ENCODE measurements at regions of chr12 and their contacts with region 1.

Region 1: DNA sequence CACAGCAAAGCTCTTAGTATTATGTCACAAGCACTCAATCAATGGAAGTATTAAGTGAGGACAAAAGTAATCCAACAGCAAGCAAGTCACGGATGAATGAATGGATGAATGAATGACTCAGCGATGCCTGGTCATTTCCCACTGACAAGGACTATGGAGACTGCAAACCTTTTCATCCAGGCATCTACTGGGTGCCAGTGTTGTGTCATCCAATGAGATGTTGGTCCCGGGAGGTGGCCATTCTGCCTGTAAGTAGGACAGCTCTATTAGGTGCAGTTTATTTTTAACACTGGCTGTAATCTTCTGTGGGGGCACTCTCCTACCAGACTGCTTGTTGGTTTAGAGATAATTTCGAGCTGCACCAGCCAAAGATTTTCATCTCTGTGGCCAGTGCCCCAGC is 39.4 kb downstream of the STAB2 start:
- DNase-seq: peak; percentile 80

Region 2: DNA sequence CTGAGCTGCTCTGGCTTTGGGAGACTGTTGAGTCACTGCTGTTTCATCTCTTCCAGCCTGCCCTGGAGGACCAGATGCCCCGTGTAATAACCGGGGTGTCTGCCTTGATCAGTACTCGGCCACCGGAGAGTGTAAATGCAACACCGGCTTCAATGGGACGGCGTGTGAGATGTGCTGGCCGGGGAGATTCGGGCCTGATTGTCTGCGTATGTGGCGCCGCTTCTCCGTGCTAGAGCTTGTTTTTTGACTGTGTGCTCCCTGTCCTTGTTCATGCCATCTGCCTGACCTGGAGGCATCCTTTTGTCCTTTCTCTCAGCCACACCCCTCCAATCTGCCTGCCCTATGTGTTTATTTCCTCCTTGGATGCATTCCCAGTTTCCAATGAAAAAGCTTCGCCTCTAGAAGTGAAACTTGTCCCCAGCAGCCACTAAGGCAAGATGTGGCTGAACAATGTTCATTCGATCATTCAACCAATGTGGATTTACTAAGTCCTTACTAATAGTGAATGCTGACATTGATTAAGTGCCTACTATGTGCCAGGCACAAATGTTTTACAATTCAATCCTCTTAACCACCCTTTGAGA is 115.9 kb after region 1 on chr12:
- intact Hi-C with region 1: loop called (anchors 10 kb)
- DNase-seq: no peak

Region 3: GRCh38 chr12:103771466-103771865 is 145.0 kb after region 1 on chr12:
- intact Hi-C with region 1: no loop called
- DNase-seq: peak; percentile 77

Region 4: DNA sequence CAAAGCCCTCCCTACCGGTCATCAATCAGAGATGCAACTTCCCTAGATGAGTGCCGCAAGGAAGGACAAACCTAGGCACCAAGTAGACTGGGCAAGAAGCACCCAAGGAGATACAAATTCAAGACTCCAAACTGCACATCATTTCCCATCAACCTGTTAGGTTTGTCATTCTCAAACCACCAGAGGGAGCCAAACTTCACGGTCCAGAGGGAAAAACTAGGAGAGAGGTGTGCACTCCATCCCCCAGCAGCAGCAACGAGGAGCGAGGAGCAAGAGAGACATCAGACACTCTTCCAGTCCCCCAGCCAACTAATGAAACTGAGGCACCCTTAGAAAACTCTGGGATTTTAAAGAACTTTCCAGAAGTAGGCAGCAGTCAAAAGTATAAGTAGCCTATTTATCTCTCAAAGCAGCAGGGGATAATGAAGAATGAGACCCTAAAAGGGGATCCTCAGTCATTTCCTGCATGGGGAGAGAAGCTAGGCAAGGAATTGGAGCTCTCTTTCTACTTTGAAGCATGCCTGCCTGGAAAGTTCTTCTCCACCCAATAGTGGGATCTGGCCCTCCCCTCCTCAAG is 251.5 kb after region 1 on chr12:
- intact Hi-C with region 1: loop called (anchors 10 kb)
- DNase-seq: no peak

Region 5: DNA sequence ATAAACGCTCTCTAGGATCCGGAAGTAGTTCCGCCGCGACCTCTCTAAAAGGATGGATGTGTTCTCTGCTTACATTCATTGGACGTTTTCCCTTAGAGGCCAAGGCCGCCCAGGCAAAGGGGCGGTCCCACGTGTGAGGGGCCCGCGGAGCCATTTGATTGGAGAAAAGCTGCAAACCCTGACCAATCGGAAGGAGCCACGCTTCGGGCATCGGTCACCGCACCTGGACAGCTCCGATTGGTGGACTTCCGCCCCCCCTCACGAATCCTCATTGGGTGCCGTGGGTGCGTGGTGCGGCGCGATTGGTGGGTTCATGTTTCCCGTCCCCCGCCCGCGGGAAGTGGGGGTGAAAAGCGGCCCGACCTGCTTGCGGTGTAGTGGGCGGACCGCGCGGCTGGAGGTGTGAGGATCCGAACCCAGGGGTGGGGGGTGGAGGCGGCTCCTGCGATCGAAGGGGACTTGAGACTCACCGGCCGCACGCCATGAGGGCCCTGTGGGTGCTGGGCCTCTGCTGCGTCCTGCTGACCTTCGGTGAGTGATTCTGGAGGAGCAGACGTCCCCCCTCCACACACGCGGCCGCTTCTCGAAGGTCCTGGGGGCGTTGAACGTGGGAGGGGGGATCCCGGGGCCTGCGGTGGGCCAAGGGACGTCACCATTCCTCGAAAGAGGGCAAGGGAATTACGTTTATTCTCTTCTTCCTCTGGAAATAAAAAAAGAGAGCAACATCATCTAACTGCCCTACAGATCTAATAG is 303.7 kb after region 1 on chr12 and contains the start of gene HSP90B1:
- intact Hi-C with region 1: loop called (anchors 5 kb)
- DNase-seq: peak; percentile 99
- total RNA-seq, gene HSP90B1: 433 TPM

Region 6: GRCh38 chr12:104057771-104058197 is 431.3 kb after region 1 on chr12:
- intact Hi-C with region 1: loop called (anchors 5 kb)
- DNase-seq: no peak